ENCODE measurements at regions of chrX and their contacts with region 1.

Region 1: GRCh38 chrX:65581661-65582339 is 47.2 kb upstream of the LAS1L start:
- DNase-seq: peak; percentile 27
- H3K4me3 Mint-ChIP-seq: no peak overlapping the region
- H3K27ac Mint-ChIP-seq: no peak overlapping the region
- H3K4me1 Mint-ChIP-seq: peaks cover 14% of the 10 kb centered on the region
- H3K27me3 Mint-ChIP-seq: no peaks in the 10 kb centered on the region

Region 2: DNA sequence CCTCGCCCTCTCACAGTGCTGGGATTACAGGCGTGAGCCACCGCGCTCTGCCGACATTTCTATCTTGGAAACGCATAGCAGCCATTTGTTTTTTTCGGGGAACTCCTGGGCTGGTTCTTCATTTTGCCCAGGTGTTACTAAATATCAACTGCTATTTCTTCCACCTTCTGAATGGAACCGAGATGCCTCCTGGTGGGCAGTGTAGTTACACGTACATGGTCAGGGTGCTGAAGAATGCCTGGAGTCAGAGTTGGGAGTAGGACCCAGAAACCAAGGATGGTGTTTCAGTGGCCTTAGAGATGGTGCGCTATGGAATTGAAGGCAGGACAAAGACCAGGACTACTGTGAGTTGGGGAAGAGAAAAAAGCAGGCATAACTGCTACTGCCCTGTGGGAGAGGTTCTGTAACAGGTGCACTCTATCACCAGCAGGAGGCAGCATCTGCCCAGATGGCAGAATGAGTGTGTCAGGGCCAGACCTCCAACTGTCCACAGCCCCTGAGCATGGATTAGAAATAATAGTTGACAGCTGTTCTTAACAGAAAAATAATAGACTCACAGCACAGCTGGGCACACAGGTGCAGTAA is 687.3 kb before region 1 on chrX:
- intact Hi-C with region 1: no loop called
- DNase-seq: no peak
- H3K4me3 Mint-ChIP-seq: no peak overlapping the region
- H3K27ac Mint-ChIP-seq: peak overlapping the region; percentile 71
- H3K4me1 Mint-ChIP-seq: peaks cover 5% of the 10 kb centered on the region
- H3K27me3 Mint-ChIP-seq: no peaks in the 10 kb centered on the region

Region 3: GRCh38 chrX:65241059-65241721 is 340.6 kb before region 1 on chrX:
- intact Hi-C with region 1: no loop called
- DNase-seq: no peak
- H3K4me3 Mint-ChIP-seq: no peak overlapping the region
- H3K27ac Mint-ChIP-seq: no peak overlapping the region
- H3K4me1 Mint-ChIP-seq: no peaks in the 10 kb centered on the region
- H3K27me3 Mint-ChIP-seq: no peaks in the 10 kb centered on the region

Region 4: GRCh38 chrX:65723706-65724105 is 141.9 kb after region 1 on chrX:
- intact Hi-C with region 1: loop called (anchors 1 kb)
- DNase-seq: peak; percentile 34
- H3K4me3 Mint-ChIP-seq: peak overlapping the region; percentile 0
- H3K27ac Mint-ChIP-seq: peak overlapping the region; percentile 76
- H3K4me1 Mint-ChIP-seq: peaks cover 82% of the 10 kb centered on the region
- H3K27me3 Mint-ChIP-seq: no peaks in the 10 kb centered on the region

Region 5: DNA sequence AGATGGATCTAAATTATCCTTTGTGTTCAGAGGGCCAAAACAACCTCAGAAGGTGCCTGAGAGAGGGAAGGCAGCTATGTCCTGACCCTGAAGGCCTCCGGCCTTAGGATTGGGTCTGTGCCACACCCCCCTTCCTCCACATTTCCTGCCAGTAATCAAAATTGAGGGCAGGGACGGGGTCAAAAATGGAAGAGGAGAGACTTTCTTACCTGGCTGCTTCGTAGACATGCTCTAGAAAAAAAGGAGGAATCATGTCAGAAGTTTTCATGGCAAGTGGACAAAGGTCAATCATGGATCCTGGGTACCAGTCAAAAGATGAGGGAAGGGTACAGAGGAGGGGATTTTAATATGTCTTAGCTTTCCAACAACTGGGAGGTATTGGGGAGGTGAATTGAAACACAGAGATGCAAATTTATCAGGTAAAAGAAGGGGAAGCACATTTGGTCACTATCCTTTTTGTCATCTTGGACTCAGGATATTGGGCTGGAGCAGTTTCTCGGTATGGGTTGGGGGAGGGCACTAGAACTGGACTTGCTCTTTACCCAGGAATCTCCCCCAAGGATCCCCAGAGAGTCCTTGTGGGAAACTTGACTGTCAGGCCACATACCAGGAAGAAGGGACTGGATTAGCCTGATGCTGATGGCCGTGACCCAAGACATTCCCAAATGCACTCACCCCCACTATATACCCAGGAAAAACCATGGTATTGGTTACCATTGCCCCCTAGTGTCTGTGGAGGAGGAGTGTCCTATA is 441.0 kb after region 1 on chrX:
- intact Hi-C with region 1: loop called (anchors 5 kb)
- DNase-seq: no peak
- H3K4me3 Mint-ChIP-seq: no peak overlapping the region
- H3K27ac Mint-ChIP-seq: peak overlapping the region; percentile 12
- H3K4me1 Mint-ChIP-seq: peaks cover 48% of the 10 kb centered on the region
- H3K27me3 Mint-ChIP-seq: no peaks in the 10 kb centered on the region

Region 6: GRCh38 chrX:66200855-66201795 is 619.3 kb after region 1 on chrX:
- intact Hi-C with region 1: loop called (anchors 5 kb)
- DNase-seq: no peak
- H3K4me3 Mint-ChIP-seq: no peak overlapping the region
- H3K27ac Mint-ChIP-seq: no peak overlapping the region
- H3K4me1 Mint-ChIP-seq: peaks cover 30% of the 10 kb centered on the region
- H3K27me3 Mint-ChIP-seq: peaks cover 9% of the 10 kb centered on the region

Region 7: DNA sequence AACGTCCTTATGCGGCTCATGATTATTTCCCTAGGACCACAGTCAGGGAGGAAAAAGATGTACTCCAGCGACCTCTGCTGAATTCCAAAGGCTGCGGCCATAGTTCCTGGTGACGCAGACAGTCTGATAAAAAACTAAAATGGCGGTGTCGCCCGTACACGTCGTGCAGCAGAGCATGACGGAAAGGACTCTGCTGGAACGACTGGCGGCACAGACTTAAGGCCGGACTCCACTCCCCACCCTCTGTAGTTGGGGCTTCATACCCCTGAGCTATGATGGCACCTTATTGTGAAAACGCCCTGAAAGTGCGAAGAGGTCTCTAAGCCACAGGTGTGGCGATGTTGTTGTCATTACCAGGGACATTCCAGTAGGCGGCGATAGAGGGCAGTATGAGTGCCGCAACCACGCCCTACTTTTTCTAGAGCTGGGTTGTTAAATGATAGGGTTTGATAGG is 1147.0 kb after region 1 on chrX:
- intact Hi-C with region 1: loop called (anchors 1 kb)
- DNase-seq: peak; percentile 19
- H3K4me3 Mint-ChIP-seq: peak overlapping the region; percentile 91
- H3K27ac Mint-ChIP-seq: peak overlapping the region; percentile 89
- H3K4me1 Mint-ChIP-seq: no peaks in the 10 kb centered on the region
- H3K27me3 Mint-ChIP-seq: peaks cover 2% of the 10 kb centered on the region

Measured in activated T-helper 1 cell treated with anti-CD3 and anti-CD28 coated beads, Interleukin-12 subunit alpha, Interleukin-12 subunit beta, Interleukin-2, Interleukin-4 antibody, amounts not matched to agents 30 ng/mL and 10 ng/mL and 1 ng/mL, durations not matched to agents 14 hours and 24 hours and 36 hours (primary cell).